SK-N-SH (cell line): ENCODE measurements at regions of chr2 and their contacts with region 1.

Region 1: GRCh38 chr2:33395655-33396249 is 80.7 kb upstream of the RASGRP3 start:
- DNase-seq: peak; percentile 50
- H3K4me3 ChIP-seq: no peak overlapping the region
- H3K27ac ChIP-seq: peak overlapping the region in 1 of 2 experiments; percentile 16; a peak in 1 of 4 replicates
- H3K4me1 ChIP-seq: no peaks in the 10 kb centered on the region
- H3K27me3 ChIP-seq: no peaks in the 10 kb centered on the region
- CTCF ChIP-seq: peak; percentile 94
- EP300 ChIP-seq: no peak
- RAD21 ChIP-seq: peak; percentile 64

Region 2: GRCh38 chr2:33406622-33407021 is 10.9 kb after region 1 on chr2:
- CTCF ChIA-PET with region 1: interaction called, 14 read pairs
- POLR2A ChIA-PET with region 1: no interaction called
- DNase-seq: no peak
- H3K4me3 ChIP-seq: no peak overlapping the region
- H3K27ac ChIP-seq: peak overlapping the region; percentile 65 to 66; a peak in 3 of 4 replicates
- H3K4me1 ChIP-seq: no peaks in the 10 kb centered on the region
- H3K27me3 ChIP-seq: no peaks in the 10 kb centered on the region
- CTCF ChIP-seq: no peak
- EP300 ChIP-seq: peak in 1 of 2 experiments; percentile 83; a peak in 2 of 4 replicates
- RAD21 ChIP-seq: no peak